ENCODE measurements at regions of chr1 and their contacts with region 1.

Region 1: GRCh38 chr1:204443866-204444581 is 32.4 kb upstream of the PPP1R15B start:
- DNase-seq: no peak
- H3K4me3 ChIP-seq: no peak overlapping the region
- H3K27ac ChIP-seq: peak overlapping the region; percentile 39 to 46
- H3K4me1 ChIP-seq: peaks cover 27% of the 10 kb centered on the region
- H3K27me3 ChIP-seq: no peaks in the 10 kb centered on the region
- CTCF ChIP-seq: no peak
- POLR2A ChIP-seq: no peak

Region 2: GRCh38 chr1:204503122-204503912 is 59.3 kb after region 1 on chr1:
- intact Hi-C with region 1: loop called (anchors 5 kb)
- DNase-seq: no peak
- H3K4me3 ChIP-seq: no peak overlapping the region
- H3K27ac ChIP-seq: no peak overlapping the region
- H3K4me1 ChIP-seq: peaks cover 6% of the 10 kb centered on the region
- H3K27me3 ChIP-seq: no peaks in the 10 kb centered on the region
- CTCF ChIP-seq: peak; percentile 63 to 78 (median 72)
- POLR2A ChIP-seq: no peak

Measured in testis (tissue), 5 donors.